Gastrocnemius medialis (tissue), 4 donors: ENCODE measurements at regions of chr17 and their contacts with region 1.

Region 1: GRCh38 chr17:21043286-21044232 is 748 bp upstream of the USP22 start:
- DNase-seq: peak in 1 of 2 donors; percentile 95
- ATAC-seq: peak; percentile 82
- H3K4me3 ChIP-seq: peak overlapping the region; percentile 61 to 97 (median 82)
- H3K27ac ChIP-seq: peak overlapping the region; percentile 86 to 98 (median 96)
- H3K4me1 ChIP-seq: peaks cover 25 to 33% of the 10 kb centered on the region in 2 donors
- H3K27me3 ChIP-seq: no peaks in the 10 kb centered on the region
- CTCF ChIP-seq: peak; percentile 94 to 98 (median 97)
- POLR2A ChIP-seq: no peak

Region 2: DNA sequence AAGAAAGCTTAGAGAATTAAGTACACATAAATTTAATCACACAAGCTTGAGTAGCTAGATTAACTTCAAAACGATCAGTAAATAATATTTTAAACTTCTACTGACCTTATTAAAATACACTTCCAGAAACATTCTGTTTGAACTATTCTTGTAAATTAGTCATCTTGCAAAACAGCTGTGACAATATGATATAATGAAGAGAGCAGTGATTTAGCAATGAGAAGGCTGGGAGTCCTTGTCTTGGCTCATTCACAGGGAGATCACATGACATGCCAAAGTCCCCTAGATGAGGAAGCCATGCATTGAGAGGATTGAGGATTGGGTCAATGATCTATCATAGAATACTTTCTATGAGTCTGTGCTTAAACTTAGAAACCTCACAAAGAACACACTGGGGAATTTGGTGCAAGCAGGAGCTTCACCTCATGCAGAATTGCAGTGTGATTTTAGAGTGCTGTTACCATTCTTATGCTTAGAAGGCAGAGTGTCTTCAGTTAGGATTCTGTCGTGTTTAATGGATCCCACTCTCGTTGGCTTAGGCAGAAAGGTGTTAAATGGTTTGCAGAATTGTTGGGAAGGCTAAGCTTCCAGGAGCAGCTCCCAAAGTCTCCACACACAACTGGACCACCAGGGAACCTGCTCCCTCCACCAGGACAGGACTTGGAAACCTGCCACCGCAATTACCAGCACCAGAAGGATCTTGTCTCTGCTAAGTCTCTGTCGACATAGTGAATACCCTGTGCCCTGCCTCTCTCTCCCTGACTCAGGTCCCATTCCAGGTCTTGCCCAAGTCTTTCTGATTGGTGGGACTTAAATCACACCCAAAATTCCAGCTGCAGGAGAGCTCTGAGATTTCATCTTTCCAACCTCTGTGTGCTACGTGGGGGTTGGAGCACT is 87.9 kb before region 1 on chr17:
- in situ Hi-C with region 1: no loop called
- intact Hi-C with region 1: loop called (anchors 10 kb)
- DNase-seq: peak; percentile 39 to 50
- ATAC-seq: peak; percentile 89 to 96
- H3K4me3 ChIP-seq: peak overlapping the region in 1 of 4 donors; percentile 7
- H3K27ac ChIP-seq: peak overlapping the region; percentile 61 to 91 (median 73)
- H3K4me1 ChIP-seq: peaks cover 18 to 33% of the 10 kb centered on the region in 2 donors
- H3K27me3 ChIP-seq: no peaks in the 10 kb centered on the region
- CTCF ChIP-seq: no peak
- POLR2A ChIP-seq: no peak

Region 3: DNA sequence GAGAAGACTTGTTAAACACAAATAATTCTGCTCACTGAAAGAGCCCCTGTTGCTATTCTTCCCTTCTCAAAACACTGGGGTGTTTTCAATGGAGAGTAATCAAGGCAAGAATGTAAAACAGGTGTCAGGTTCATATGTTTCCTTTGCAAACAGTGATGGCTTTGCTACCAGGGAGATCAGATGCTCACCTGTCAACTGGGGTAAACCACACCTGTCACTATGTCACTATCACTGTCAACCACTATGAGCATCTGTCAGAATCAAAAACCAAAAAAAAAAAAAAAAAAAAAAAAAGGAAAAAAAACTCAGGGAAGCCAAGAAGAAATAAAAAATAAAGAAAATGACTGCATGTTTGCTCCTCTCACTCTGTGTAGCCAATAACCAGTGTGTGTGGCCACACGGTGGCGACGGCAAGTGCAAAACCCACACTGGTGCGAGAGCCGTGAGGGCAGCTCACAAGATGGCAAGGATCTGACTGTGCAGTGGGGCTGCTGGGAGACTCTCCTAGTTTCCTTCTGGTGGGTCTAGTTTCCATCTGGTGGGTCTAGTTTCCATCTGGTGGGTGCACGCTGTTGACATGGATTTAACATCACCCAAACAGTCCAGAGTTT is 23.5 kb before region 1 on chr17:
- in situ Hi-C with region 1: no loop called
- intact Hi-C with region 1: loop called (anchors 1 kb)
- DNase-seq: peak in 1 of 2 donors; percentile 58
- ATAC-seq: peak; percentile 67 to 70
- H3K4me3 ChIP-seq: no peak overlapping the region
- H3K27ac ChIP-seq: peak overlapping the region; percentile 47 to 72 (median 62)
- H3K4me1 ChIP-seq: peaks cover 34 to 40% of the 10 kb centered on the region in 2 donors
- H3K27me3 ChIP-seq: no peaks in the 10 kb centered on the region
- CTCF ChIP-seq: peak in 3 of 5 experiments; percentile 25 to 43 (median 38)
- POLR2A ChIP-seq: no peak

Region 4: GRCh38 chr17:21166595-21167210 is 123.1 kb after region 1 on chr17:
- in situ Hi-C with region 1: no loop called
- intact Hi-C with region 1: loop called (anchors 1 kb)
- DNase-seq: no peak
- ATAC-seq: peak; percentile 53 to 63
- H3K4me3 ChIP-seq: peak overlapping the region; percentile 34 to 42 (median 36)
- H3K27ac ChIP-seq: peak overlapping the region; percentile 92 to 98 (median 96)
- H3K4me1 ChIP-seq: peaks cover 84 to 89% of the 10 kb centered on the region in 2 donors
- H3K27me3 ChIP-seq: no peaks in the 10 kb centered on the region
- CTCF ChIP-seq: no peak
- POLR2A ChIP-seq: no peak

Region 5: GRCh38 chr17:21275579-21276263 is 232.2 kb after region 1 on chr17:
- in situ Hi-C with region 1: loop called in 1 of 4 experiments (anchors 10 kb)
- intact Hi-C with region 1: no loop called
- DNase-seq: peak; percentile 88 to 93
- ATAC-seq: peak; percentile 74 to 76
- H3K4me3 ChIP-seq: peak overlapping the region; percentile 59 to 80 (median 64)
- H3K27ac ChIP-seq: peak overlapping the region; percentile 75 to 94 (median 82)
- H3K4me1 ChIP-seq: peaks cover 31 to 33% of the 10 kb centered on the region in 2 donors
- H3K27me3 ChIP-seq: no peaks in the 10 kb centered on the region
- CTCF ChIP-seq: no peak
- POLR2A ChIP-seq: peak; percentile 71 to 80